Endothelial cell of umbilical vein (primary cell): ENCODE measurements at regions of chr1 and their contacts with region 1.

Region 1: GRCh38 chr1:10494754-10495474 is 20.2 kb downstream of the PEX14 start:
- DNase-seq: peak; percentile 59
- H3K4me3 ChIP-seq: no peak overlapping the region
- H3K27ac ChIP-seq: no peak overlapping the region
- H3K4me1 ChIP-seq: peaks cover 5% of the 10 kb centered on the region
- H3K27me3 ChIP-seq: no peaks in the 10 kb centered on the region
- CTCF ChIP-seq: peak; percentile 92 to 93
- POLR2A ChIP-seq: no peak

Region 2: GRCh38 chr1:10170239-10170574 is 324.7 kb before region 1 on chr1:
- CTCF ChIA-PET with region 1: no interaction called
- POLR2A ChIA-PET with region 1: no interaction called
- dilution Hi-C with region 1: no loop called
- intact Hi-C with region 1: no loop called
- DNase-seq: no peak
- H3K4me3 ChIP-seq: no peak overlapping the region
- H3K27ac ChIP-seq: no peak overlapping the region
- H3K4me1 ChIP-seq: no peaks in the 10 kb centered on the region
- H3K27me3 ChIP-seq: no peaks in the 10 kb centered on the region
- CTCF ChIP-seq: no peak
- POLR2A ChIP-seq: no peak

Region 3: DNA sequence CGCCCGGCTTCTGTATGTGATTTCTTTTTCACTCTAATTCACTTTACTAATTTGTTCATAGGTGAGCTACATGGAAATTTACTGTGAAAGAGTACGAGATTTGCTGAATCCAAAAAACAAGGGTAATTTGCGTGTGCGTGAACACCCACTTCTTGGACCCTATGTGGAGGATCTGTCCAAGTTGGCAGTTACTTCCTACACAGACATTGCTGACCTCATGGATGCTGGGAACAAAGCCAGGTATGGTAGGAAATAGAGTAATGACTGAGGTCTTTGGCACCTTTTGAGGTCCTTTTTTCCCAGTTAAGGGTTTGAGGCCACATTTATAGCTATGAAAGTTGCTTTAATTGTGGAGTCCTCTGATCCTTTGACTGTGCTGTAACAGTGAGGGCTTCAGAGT is 227.6 kb before region 1 on chr1:
- CTCF ChIA-PET with region 1: no interaction called
- POLR2A ChIA-PET with region 1: no interaction called
- dilution Hi-C with region 1: no loop called
- intact Hi-C with region 1: no loop called
- DNase-seq: no peak
- H3K4me3 ChIP-seq: no peak overlapping the region
- H3K27ac ChIP-seq: no peak overlapping the region
- H3K4me1 ChIP-seq: no peaks in the 10 kb centered on the region
- H3K27me3 ChIP-seq: no peaks in the 10 kb centered on the region
- CTCF ChIP-seq: no peak
- POLR2A ChIP-seq: no peak

Region 4: DNA sequence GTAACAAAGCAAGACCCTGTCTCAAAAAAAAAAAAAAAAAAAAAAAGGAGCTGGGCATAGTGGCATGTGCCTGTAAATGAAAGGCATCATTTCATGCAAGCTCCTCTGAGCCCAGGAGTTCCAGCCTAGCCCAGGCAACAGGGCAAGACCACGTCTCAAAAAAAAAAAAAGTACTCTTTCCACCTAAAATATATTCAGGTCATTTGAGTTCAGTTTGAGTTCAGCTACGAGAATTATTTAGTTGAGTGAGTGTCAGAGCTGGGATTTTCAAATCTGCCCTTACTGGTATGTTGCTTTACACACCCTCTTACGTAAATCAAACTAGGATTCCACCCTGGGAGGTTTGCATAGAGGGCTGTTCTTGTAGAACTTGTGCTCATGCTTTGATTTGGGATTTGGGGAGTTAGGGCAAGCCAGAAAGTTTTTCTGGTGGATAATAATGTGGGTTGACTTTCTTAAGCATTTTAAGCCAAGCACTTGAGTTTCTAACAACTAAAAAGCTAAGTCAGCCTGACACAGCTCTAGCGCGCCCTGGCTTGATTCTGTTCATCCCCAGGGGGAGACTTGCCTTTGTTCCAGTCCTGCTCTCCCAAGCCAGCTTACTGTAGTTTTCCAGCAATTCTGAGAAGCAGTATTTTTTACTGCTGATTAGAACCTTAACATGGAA is 107.4 kb before region 1 on chr1:
- CTCF ChIA-PET with region 1: interaction called, 11 read pairs
- POLR2A ChIA-PET with region 1: interaction called, 4 read pairs
- dilution Hi-C with region 1: no loop called
- intact Hi-C with region 1: no loop called
- DNase-seq: peak; percentile 63
- H3K4me3 ChIP-seq: no peak overlapping the region
- H3K27ac ChIP-seq: peak overlapping the region; percentile 71
- H3K4me1 ChIP-seq: peaks cover 12% of the 10 kb centered on the region
- H3K27me3 ChIP-seq: no peaks in the 10 kb centered on the region
- CTCF ChIP-seq: no peak
- POLR2A ChIP-seq: no peak

Region 5: DNA sequence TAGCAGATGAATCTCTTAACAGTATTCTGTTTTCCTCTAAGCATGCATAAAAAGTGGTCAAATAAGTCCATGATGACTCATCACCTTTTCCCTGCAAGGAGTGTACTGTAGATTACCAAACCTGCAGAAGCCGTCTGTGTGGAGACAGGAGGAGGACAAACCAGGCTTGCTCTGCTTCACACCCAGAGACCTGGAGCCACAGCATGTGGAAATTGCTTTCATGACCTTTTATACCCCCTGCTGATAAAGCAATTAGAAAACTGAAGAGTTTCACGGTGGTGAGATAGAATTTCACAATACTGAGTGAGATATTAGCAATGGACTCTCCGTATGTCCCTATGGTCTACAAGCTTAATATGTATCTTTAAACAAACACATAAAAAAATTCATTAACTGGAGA is 35.7 kb before region 1 on chr1:
- CTCF ChIA-PET with region 1: interaction called, 20 read pairs
- POLR2A ChIA-PET with region 1: no interaction called
- dilution Hi-C with region 1: no loop called
- intact Hi-C with region 1: no loop called
- DNase-seq: peak; percentile 56
- H3K4me3 ChIP-seq: no peak overlapping the region
- H3K27ac ChIP-seq: no peak overlapping the region
- H3K4me1 ChIP-seq: peaks cover 20% of the 10 kb centered on the region
- H3K27me3 ChIP-seq: no peaks in the 10 kb centered on the region
- CTCF ChIP-seq: no peak
- POLR2A ChIP-seq: no peak

Region 6: GRCh38 chr1:10519016-10519417 is 24.1 kb after region 1 on chr1:
- CTCF ChIA-PET with region 1: interaction called, 11 read pairs
- POLR2A ChIA-PET with region 1: no interaction called
- dilution Hi-C with region 1: no loop called
- intact Hi-C with region 1: no loop called
- DNase-seq: no peak
- H3K4me3 ChIP-seq: no peak overlapping the region
- H3K27ac ChIP-seq: no peak overlapping the region
- H3K4me1 ChIP-seq: peaks cover 3% of the 10 kb centered on the region
- H3K27me3 ChIP-seq: no peaks in the 10 kb centered on the region
- CTCF ChIP-seq: no peak
- POLR2A ChIP-seq: no peak

Region 7: DNA sequence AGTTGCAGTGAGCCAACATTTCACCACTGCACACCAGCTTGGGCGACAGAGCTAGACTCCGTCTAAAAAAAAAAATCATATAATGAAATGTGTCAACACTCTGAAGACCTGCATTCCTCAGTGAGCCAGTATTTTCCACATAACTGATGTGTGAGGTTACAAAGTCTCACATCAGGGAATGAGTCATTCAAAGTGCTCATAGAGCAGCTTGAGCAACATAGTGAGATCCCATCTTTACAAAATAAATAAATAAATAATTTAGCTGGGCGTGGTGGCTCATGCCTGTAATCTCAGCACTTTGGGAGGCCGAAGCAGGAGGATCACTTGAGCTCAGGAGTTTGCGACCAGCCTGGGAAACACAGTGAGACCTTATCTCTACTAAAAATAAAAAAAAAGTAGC is 236.1 kb after region 1 on chr1:
- CTCF ChIA-PET with region 1: no interaction called
- POLR2A ChIA-PET with region 1: no interaction called
- dilution Hi-C with region 1: no loop called
- intact Hi-C with region 1: no loop called
- DNase-seq: peak; percentile 21
- H3K4me3 ChIP-seq: no peak overlapping the region
- H3K27ac ChIP-seq: no peak overlapping the region
- H3K4me1 ChIP-seq: no peaks in the 10 kb centered on the region
- H3K27me3 ChIP-seq: no peaks in the 10 kb centered on the region
- CTCF ChIP-seq: no peak
- POLR2A ChIP-seq: no peak

Region 8: GRCh38 chr1:10941891-10942541 is 447.1 kb after region 1 on chr1:
- CTCF ChIA-PET with region 1: interaction called, 7 read pairs
- POLR2A ChIA-PET with region 1: no interaction called
- dilution Hi-C with region 1: no loop called
- intact Hi-C with region 1: loop called (anchors 1 kb)
- DNase-seq: peak; percentile 22
- H3K4me3 ChIP-seq: no peak overlapping the region
- H3K27ac ChIP-seq: no peak overlapping the region
- H3K4me1 ChIP-seq: no peaks in the 10 kb centered on the region
- H3K27me3 ChIP-seq: peaks cover 8 to 9% of the 10 kb centered on the region in 2 experiments
- CTCF ChIP-seq: peak; percentile 91 to 98
- POLR2A ChIP-seq: no peak